WTC11 (cell line): ENCODE measurements at regions of chr17 and their contacts with region 1.

Region 1: GRCh38 chr17:62692721-62693483 is 65.4 kb downstream of the MRC2 start:
- DNase-seq: peak; percentile 78
- ATAC-seq: peak; percentile 88
- H3K4me3 Mint-ChIP-seq: no peak overlapping the region
- H3K27ac Mint-ChIP-seq: no peak overlapping the region
- H3K4me1 Mint-ChIP-seq: peaks cover 10% of the 10 kb centered on the region
- H3K27me3 Mint-ChIP-seq: no peaks in the 10 kb centered on the region; the same call in 1 of the 2 replicates
- CTCF ChIP-seq: peak; percentile 26; the same call in 1 of the 2 replicates

Region 2: GRCh38 chr17:62444063-62444462 is 248.8 kb before region 1 on chr17:
- CTCF ChIA-PET with region 1: no interaction called
- POLR2A ChIA-PET with region 1: no interaction called
- DNase-seq: no peak
- ATAC-seq: no peak
- H3K4me3 Mint-ChIP-seq: no peak overlapping the region
- H3K27ac Mint-ChIP-seq: no peak overlapping the region; the same call in 1 of the 2 replicates
- H3K4me1 Mint-ChIP-seq: no peaks in the 10 kb centered on the region
- H3K27me3 Mint-ChIP-seq: no peaks in the 10 kb centered on the region
- CTCF ChIP-seq: no peak

Region 3: DNA sequence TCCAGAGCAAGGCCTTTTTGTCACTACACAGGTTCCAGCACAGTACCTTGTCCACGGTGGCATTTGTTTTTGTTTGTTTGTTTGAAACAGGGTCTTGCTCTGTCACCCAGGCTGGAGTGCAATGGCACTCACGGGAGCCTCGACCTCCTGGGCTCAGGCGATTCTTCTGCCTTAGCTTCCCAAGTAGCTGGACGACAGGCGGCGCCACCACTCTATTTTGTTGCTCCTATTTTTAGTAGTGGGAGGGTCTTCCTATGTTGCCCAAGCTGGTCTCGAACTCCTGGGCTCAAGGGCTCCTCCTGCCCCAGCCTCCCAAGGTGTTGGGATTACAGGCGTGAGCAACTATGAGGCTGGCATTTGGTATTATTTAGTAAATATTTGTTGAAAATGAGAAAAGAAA is 55.1 kb before region 1 on chr17:
- CTCF ChIA-PET with region 1: interaction called, 19 read pairs
- POLR2A ChIA-PET with region 1: no interaction called
- DNase-seq: peak; percentile 77
- ATAC-seq: peak; percentile 60
- H3K4me3 Mint-ChIP-seq: no peak overlapping the region
- H3K27ac Mint-ChIP-seq: peak overlapping the region; percentile 79
- H3K4me1 Mint-ChIP-seq: peaks cover 13% of the 10 kb centered on the region
- H3K27me3 Mint-ChIP-seq: no peaks in the 10 kb centered on the region
- CTCF ChIP-seq: no peak

Region 4: GRCh38 chr17:62671583-62672312 is 21.2 kb before region 1 on chr17:
- CTCF ChIA-PET with region 1: interaction called, 15 read pairs
- POLR2A ChIA-PET with region 1: interaction called, 6 read pairs
- DNase-seq: no peak
- ATAC-seq: no peak
- H3K4me3 Mint-ChIP-seq: no peak overlapping the region
- H3K27ac Mint-ChIP-seq: no peak overlapping the region
- H3K4me1 Mint-ChIP-seq: peaks cover 5% of the 10 kb centered on the region; the same call in 1 of the 2 replicates
- H3K27me3 Mint-ChIP-seq: no peaks in the 10 kb centered on the region
- CTCF ChIP-seq: no peak

Region 5: DNA sequence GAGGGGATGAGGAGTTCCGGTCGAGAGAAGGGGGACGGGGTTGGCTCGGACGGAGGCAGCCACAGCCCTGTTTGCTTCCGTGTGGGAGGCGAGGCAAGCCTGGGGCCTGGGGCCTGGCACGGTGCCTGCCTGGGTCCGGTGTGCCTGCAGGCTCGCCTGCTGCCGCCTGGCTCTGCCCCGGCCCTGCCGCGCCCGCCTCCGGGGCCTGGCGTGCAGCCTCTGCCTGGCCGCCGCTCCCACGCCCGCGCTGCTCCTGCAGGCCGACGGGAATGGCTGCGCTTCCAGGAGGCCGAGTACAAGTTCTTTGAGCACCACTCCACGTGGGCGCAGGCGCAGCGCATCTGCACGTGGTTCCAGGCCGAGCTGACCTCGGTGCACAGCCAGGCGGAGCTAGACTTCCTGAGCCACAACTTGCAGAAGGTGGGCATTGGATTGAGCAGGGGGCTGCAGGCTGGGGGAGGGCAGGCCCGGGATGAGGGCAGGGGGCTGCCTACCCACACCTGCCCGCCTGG is 12.3 kb before region 1 on chr17:
- CTCF ChIA-PET with region 1: interaction called, 14 read pairs
- POLR2A ChIA-PET with region 1: no interaction called
- DNase-seq: no peak
- ATAC-seq: peak; percentile 43
- H3K4me3 Mint-ChIP-seq: no peak overlapping the region
- H3K27ac Mint-ChIP-seq: no peak overlapping the region; the same call in 1 of the 2 replicates
- H3K4me1 Mint-ChIP-seq: no peaks in the 10 kb centered on the region
- H3K27me3 Mint-ChIP-seq: no peaks in the 10 kb centered on the region
- CTCF ChIP-seq: no peak

Region 6: GRCh38 chr17:62819475-62820212 is 126.7 kb after region 1 on chr17:
- CTCF ChIA-PET with region 1: no interaction called
- POLR2A ChIA-PET with region 1: no interaction called
- DNase-seq: no peak
- ATAC-seq: peak; percentile 65
- H3K4me3 Mint-ChIP-seq: no peak overlapping the region
- H3K27ac Mint-ChIP-seq: peak overlapping the region; percentile 26; the same call in 1 of the 2 replicates
- H3K4me1 Mint-ChIP-seq: peaks cover 30% of the 10 kb centered on the region
- H3K27me3 Mint-ChIP-seq: no peaks in the 10 kb centered on the region
- CTCF ChIP-seq: no peak